Body of pancreas (tissue), 4 donors: ENCODE measurements at regions of chr15 and their contacts with region 1.

Region 1: DNA sequence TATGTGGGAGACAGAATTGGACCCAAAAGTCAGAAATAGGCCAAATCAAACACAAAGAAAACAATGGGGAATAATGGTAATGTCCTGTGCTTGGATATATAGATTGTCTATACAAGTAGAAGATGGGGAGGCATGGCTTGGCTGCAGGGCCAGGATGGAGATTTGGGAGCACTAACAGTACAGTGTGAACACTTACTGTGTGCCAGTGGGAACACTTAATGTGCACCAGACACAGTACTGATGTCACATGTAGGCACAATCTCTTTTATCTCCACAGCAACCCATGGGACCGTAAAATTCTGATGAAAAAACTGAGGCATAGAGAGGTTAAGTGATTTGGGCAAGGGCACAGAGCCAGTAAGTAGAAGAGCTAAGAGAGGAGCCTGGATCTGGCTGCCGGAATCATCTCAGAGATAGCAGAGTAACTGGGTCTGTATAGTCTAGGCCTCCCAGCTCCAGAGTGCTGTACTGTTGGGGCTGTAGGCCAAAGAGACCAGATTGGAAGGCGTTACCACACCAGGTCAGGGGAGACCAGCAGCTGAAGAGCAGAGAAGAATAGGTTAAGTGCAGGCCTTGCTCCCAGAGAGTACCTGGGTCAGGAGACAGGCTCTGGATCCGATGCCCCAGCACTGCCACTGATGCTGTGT is 63.3 kb downstream of the RLBP1 start:
- DNase-seq: no peak
- ATAC-seq: no peak
- H3K4me3 ChIP-seq: no peak overlapping the region
- H3K27ac ChIP-seq: no peak overlapping the region
- H3K4me1 ChIP-seq: peaks cover 5% of the 10 kb centered on the region
- H3K27me3 ChIP-seq: no peaks in the 10 kb centered on the region
- CTCF ChIP-seq: no peak
- POLR2A ChIP-seq: no peak

Region 2: DNA sequence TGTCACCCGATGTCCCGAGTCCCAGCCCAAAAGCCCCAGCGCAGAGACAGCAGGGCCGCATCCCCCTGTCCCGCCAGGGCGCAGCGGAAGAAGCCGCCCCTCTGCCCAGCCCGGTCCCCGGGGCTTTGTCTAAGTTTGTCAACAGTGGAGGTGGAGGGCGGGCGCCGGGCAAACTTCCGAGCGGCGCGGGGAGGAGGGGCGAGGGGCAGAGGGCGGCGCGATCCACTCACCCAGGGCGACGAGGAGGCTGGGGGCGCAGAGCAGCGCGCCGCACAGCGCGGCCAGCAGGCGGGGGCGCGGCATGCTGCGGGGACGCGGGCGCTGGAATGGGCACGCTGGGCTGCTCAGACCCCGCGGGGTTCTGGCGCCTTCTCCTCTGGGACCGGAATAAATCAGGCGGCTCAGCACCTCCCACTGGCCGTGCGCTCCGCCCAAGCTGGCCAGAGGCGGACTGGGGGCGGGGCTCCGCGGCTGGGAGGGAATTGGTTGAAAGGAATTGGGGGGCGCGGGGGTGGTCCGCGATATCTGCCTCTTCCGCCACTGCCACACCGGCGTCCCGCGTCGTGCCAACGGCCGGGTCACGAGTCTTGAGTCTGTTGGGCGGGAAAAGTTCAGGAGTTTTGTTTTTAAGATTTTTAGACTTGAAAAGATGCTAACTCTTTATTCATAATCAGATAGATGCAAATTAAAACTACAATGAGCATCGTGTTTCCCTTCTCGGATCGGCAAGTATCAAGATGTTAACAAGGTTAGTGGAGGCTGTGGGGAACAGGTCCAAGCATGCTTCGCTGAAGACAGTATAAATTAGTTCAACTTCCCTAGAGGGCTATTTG is 244.8 kb before region 1 on chr15 and contains the start of gene MFGE8:
- intact Hi-C with region 1: no loop called
- DNase-seq: peak; percentile 48 to 67 (median 54)
- ATAC-seq: peak; percentile 72
- H3K4me3 ChIP-seq: peak within 1 kb of the TSS in 1 of 2 donors; percentile 40
- H3K27ac ChIP-seq: peak within 1 kb of the TSS in 2 of 4 donors; percentile 9 to 27
- H3K4me1 ChIP-seq: peaks cover 15% of the 10 kb centered on the region
- H3K27me3 ChIP-seq: no peaks in the 10 kb centered on the region
- CTCF ChIP-seq: no peak
- POLR2A ChIP-seq: peak in 2 of 3 donors; percentile 17 to 45
- total RNA-seq, gene MFGE8: 51.4 to 77.5 TPM

Region 3: GRCh38 chr15:88970232-88970631 is 187.8 kb before region 1 on chr15:
- intact Hi-C with region 1: no loop called
- DNase-seq: no peak
- ATAC-seq: no peak
- H3K4me3 ChIP-seq: no peak overlapping the region
- H3K27ac ChIP-seq: no peak overlapping the region
- H3K4me1 ChIP-seq: no peaks in the 10 kb centered on the region
- H3K27me3 ChIP-seq: no peaks in the 10 kb centered on the region
- CTCF ChIP-seq: no peak
- POLR2A ChIP-seq: no peak

Region 4: DNA sequence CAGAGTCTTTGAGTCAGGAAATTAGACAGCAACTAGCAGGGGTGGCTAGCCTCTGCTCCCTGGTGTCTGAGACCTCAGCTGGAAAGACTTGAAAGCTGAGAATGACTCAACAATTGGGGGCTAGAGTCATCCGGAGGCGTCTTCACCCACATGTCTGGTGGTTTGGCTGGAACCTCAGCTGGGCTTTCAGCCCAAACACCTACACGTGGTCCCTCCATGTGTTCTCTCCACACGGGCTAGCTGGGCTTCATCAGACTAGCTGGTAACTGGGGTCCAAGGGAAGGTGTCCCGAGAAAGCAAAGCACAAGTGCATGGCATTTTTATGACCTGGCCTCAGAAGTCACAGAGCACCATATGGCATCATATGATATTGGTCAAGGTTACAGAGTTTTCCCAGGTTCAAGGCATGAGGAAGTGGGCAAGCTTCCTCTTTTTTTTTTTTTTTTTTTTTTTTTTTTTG is 89.7 kb before region 1 on chr15:
- intact Hi-C with region 1: loop called (anchors 5 kb)
- DNase-seq: peak in 2 of 4 donors; percentile 20 to 41
- ATAC-seq: peak; percentile 30
- H3K4me3 ChIP-seq: no peak overlapping the region
- H3K27ac ChIP-seq: peak overlapping the region in 1 of 4 donors; percentile 38
- H3K4me1 ChIP-seq: no peaks in the 10 kb centered on the region
- H3K27me3 ChIP-seq: no peaks in the 10 kb centered on the region
- CTCF ChIP-seq: no peak
- POLR2A ChIP-seq: no peak

Region 5: DNA sequence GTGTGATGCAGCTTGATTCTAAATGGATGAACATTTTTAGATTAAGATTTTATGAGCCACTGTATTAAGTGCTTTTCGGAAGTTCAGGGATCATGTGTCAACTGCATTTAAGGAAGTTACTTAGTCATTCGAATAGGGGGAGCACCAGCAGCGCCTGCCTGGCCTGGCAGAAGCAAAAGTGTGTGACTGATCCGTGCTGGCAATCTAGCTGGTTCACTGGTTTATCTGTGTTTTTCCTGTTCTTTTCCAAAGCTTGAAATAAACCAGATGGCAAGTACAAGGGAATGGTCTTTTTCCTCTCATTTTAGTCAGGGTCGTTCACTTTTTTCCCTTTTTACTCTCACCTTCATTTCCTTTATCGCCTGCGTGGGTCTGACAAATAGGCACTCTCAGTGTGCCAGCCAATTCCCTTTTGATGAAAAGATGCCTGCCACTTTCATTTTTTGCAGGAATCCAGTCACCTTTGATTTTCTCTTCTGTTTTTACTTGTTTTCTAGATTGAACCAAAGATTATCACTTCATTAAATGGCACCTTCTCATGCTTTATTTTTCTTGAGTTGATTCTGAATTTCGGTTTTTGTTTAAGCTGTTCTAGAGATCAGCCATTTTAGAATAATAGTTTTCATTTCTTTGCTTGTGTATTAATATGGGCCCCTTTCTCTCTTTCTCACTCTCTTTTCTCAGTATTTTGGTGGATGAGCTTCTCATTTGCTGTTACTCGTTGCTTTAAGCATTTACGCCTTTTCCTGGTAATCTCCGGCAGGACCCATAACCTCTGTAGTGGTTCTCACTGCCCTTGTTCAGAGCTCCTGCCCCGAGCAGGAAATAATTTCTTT is 67.0 kb before region 1 on chr15:
- intact Hi-C with region 1: no loop called
- DNase-seq: peak; percentile 64 to 87 (median 82)
- ATAC-seq: no peak
- H3K4me3 ChIP-seq: no peak overlapping the region
- H3K27ac ChIP-seq: peak overlapping the region; percentile 93 to 98 (median 95)
- H3K4me1 ChIP-seq: peaks cover 75% of the 10 kb centered on the region
- H3K27me3 ChIP-seq: no peaks in the 10 kb centered on the region
- CTCF ChIP-seq: no peak
- POLR2A ChIP-seq: peak in 2 of 3 donors; percentile 56 to 75

Region 6: GRCh38 chr15:89946781-89947221 is 788.8 kb after region 1 on chr15:
- intact Hi-C with region 1: no loop called
- DNase-seq: no peak
- ATAC-seq: no peak
- H3K4me3 ChIP-seq: no peak overlapping the region
- H3K27ac ChIP-seq: no peak overlapping the region
- H3K4me1 ChIP-seq: no peaks in the 10 kb centered on the region
- H3K27me3 ChIP-seq: no peaks in the 10 kb centered on the region
- CTCF ChIP-seq: no peak
- POLR2A ChIP-seq: no peak